ENCODE measurements at regions of chr18 and their contacts with region 1.

Region 1: DNA sequence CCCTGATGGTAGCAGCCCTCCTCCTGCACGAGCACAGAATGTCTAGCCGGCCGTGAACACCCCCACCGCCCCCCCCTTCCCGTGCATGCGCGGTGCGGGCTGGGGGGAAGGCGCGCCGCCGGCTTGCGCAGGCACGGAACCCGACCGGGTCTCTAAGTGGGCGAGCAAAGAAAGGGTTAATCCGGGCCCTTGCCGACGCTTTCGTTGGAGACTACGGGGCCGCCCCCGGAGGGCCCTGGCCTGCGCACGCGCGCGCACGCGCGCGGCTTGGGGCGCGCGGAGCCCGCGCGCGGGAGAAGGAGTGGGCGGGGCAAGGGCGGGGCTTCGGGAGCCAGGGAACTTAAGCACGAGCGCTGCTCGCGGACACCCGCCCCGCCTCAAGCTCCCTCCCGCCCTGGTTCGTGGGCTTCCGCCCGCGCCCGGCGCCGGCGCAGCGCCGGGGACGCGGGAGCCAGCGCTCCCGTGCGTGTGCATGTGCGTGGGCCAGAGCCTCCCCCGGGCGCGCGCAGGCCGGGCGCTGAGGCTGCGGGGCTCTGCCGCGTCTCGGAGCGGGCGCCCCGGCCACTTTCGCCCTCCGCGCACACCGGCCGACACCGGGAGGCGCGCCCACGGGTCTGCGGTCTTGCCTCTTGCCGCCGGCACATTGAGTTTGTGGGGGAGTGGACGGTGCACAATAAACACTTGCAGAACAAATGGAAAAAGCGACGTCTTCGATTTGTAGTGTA is 617 bp upstream of the ZBTB14 start:
- DNase-seq: peak; percentile 73 to 94 (median 90)
- H3K4me3 ChIP-seq: peak overlapping the region; percentile 42 to 94 (median 82)
- H3K27ac ChIP-seq: peak overlapping the region; percentile 92 to 100 (median 98)
- H3K27me3 ChIP-seq: no peaks in the 10 kb centered on the region
- CTCF ChIP-seq: peak in 5 of 56 donors; percentile 4 to 35 (median 10)

Region 2: DNA sequence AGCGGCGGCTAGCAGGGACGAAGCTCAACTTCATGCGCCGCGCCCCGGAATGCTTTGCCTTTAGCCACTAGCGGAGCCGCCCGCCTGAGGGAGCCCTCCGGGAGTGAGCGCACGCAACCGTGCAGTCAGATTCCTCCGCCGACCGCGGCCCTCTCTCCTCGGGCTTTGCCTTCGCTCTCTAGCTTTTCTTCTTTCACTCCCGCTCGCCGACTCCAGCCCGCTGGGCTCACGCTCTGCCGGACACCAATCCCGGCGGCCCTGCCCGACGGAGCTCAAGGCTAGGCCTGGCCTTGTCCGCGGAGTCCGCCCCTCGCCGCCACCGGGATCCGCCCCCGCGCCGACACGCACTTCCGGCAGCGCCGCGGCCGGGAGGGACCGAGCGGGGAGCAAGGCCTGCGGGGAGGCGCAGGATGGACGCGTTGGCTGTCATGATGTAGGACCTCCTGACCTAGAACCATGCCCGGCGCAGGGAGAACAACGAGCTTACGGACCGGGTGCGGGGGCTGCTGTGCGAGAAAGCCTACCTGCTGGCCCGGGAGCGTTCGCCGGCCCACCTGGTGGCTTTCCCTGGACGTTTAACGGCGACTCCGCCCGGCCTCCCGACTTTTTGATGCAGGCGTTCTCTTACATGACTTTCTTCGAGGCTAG is 58.3 kb before region 1 on chr18:
- intact Hi-C with region 1: loop called (anchors 1 kb)
- DNase-seq: peak; percentile 80 to 95 (median 89)
- H3K4me3 ChIP-seq: peak overlapping the region; percentile 63 to 98 (median 88)
- H3K27ac ChIP-seq: peak overlapping the region; percentile 92 to 100 (median 99)
- H3K27me3 ChIP-seq: no peaks in the 10 kb centered on the region
- CTCF ChIP-seq: peak in 48 of 56 donors; percentile 3 to 73 (median 44)

Region 3: DNA sequence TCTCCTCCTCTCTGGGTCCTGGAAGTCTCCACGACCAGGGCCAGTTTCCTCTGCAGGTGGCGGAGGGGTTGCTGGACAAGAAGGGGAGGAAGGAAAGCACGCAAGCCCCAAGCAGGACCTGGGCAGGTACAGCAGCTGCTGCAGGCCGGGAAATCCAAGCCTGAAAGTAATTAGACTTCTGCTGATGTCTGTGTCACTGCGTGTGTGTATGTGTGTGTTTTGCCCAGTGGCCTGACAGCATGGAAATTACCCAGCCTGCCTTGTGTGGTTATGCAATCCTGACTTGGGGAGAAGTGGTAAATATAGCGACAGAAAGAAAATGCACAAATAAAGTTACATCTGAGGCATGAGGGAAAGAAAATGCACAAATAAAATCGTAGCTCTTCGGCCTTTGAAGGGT is 121.2 kb after region 1 on chr18:
- intact Hi-C with region 1: loop called (anchors 5 to 10 kb)
- DNase-seq: peak; percentile 37 to 87 (median 72)
- H3K4me3 ChIP-seq: peak overlapping the region in 54 of 59 donors; percentile 1 to 68 (median 46)
- H3K27ac ChIP-seq: peak overlapping the region; percentile 1 to 97 (median 89)
- H3K27me3 ChIP-seq: no peaks in the 10 kb centered on the region
- CTCF ChIP-seq: peak in 1 of 56 donors; percentile 13

Region 4: DNA sequence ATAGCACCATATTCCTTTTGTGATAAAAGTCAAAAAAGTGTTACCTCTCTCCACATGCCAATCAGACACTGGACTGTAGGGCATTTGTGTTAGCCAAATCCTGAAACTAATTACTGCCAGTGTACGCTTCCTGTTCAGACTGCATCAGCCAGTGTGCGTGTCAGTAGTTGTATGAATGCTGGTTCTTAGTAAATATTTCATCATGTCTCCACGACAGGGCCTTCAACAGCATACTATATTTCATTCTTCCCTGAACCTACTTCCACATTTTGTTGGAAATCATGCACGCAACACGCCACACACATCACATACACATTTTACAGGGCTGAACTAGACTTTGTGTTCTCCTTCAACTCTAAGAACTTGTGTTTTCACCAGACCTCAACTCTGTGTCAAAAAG is 170.1 kb after region 1 on chr18:
- intact Hi-C with region 1: no loop called
- DNase-seq: no peak
- H3K4me3 ChIP-seq: no peak overlapping the region
- H3K27ac ChIP-seq: peak overlapping the region in 2 of 59 donors; percentile 7 to 12
- H3K27me3 ChIP-seq: no peaks in the 10 kb centered on the region
- CTCF ChIP-seq: no peak

Region 5: GRCh38 chr18:5628512-5629255 is 332.5 kb after region 1 on chr18:
- intact Hi-C with region 1: loop called in 1 of 2 experiments (anchors 2 kb)
- DNase-seq: peak in 9 of 10 donors; percentile 24 to 82 (median 56)
- H3K4me3 ChIP-seq: peak overlapping the region; percentile 58 to 85 (median 73)
- H3K27ac ChIP-seq: peak overlapping the region in 56 of 59 donors; percentile 23 to 92 (median 78)
- H3K27me3 ChIP-seq: peaks cover 0 to 17% (median 0%) of the 10 kb centered on the region in 45 donors
- CTCF ChIP-seq: no peak

Measured in dorsolateral prefrontal cortex (tissue), 120 donors.